ENCODE measurements at regions of chr11 and their contacts with region 1.

Region 1: DNA sequence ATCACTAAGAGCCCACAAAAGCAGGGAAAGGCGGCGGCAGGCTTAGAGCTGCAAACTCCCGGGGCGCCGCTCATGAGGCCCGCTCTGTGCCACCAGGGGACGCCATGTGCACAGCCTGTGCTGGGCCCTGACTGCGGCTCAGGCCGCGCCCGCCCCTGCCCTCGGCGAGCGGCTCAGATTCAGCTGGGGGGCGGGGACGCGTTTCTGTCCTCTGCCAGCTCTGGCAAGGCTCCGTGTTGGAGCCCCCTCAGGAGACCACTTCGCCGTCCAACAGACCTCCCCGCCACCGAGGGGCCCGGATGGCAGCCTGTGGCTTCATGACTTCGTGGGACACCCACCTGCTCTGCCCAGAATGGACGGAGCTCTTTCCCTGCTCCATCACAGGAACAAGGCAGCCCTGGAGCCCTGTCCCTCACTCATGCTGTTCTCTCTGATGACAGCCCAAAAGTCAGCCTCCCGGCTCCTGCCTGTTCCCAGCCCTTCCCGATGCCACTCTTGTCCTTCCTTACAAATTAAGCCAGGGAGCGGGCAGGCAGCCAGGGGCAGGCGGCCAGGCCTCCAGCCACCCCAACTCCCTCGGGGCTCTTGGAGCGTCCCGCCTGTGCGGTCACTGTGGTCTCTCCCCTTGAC is 69.1 kb downstream of the NAT10 start:
- DNase-seq: peak; percentile 67 to 76 (median 72)
- H3K4me3 ChIP-seq: no peak overlapping the region
- H3K4me3 Mint-ChIP-seq: peak overlapping the region in 7 of 8 donors; percentile 21 to 68 (median 57)
- H3K27ac ChIP-seq: no peak overlapping the region
- H3K27ac Mint-ChIP-seq: peak overlapping the region in 1 of 7 donors; percentile 35
- H3K4me1 ChIP-seq: peaks cover 6% of the 10 kb centered on the region
- H3K4me1 Mint-ChIP-seq: peaks cover 0 to 7% (median 1%) of the 10 kb centered on the region in 4 donors
- H3K27me3 ChIP-seq: no peaks in the 10 kb centered on the region
- H3K27me3 Mint-ChIP-seq: peaks cover 0 to 3% of the 10 kb centered on the region in 2 donors

Region 2: DNA sequence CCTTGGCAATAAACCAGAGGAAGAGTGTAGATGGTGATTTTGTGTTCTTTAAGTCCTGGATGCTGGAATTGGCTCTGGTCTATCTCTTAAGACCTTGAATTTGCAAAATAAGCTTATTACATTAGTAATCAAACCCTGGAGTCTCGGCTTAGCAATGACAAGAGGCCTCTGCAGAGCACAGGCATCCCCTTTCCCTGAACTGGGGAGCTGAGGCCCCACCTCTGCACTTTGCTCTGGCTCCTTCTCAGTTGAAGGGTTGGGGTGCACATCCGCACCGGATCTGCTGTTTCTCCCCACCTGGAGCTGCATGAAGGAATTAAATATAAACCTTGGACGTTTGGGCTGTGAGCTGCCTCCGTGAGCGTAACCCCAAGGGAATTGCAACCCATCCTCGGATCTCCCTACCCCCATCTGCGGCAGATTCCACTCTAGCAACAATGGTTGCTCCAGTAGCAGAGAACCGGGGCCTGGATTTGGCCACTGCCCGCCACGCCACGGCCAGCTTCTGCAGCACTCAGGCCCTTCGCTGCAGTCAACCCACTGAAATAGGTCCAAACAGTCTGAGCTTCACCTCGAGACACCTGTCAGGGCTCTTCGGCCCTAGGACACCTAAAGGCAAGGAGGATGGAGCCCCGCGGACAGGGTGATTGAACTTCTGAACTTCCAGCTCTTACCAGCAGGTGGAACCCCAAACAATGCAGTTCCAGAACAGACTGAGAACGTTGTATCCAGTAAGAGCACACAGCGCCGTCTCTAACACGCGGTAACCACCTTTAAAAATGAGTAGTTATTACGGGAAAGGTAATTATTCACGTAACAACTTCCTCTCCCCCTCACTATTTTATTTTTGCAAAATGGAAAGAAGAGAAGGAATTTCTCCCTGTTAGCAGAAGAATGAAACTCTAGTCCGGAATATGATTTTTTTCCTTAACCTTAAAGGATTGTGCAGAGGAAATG is 177.8 kb before region 1 on chr11:
- CTCF ChIA-PET with region 1: interaction called, 22 read pairs
- POLR2A ChIA-PET with region 1: no interaction called
- intact Hi-C with region 1: loop called (anchors 1 kb)
- DNase-seq: peak; percentile 71 to 77 (median 72)
- H3K4me3 ChIP-seq: no peak overlapping the region
- H3K4me3 Mint-ChIP-seq: peak overlapping the region in 6 of 8 donors; percentile 4 to 73 (median 62)
- H3K27ac ChIP-seq: no peak overlapping the region
- H3K27ac Mint-ChIP-seq: no peak overlapping the region
- H3K4me1 ChIP-seq: peaks cover 8% of the 10 kb centered on the region
- H3K4me1 Mint-ChIP-seq: peaks cover 6 to 11% (median 7%) of the 10 kb centered on the region in 4 donors
- H3K27me3 ChIP-seq: no peaks in the 10 kb centered on the region
- H3K27me3 Mint-ChIP-seq: peaks cover 14 to 23% of the 10 kb centered on the region in 2 donors

Region 3: DNA sequence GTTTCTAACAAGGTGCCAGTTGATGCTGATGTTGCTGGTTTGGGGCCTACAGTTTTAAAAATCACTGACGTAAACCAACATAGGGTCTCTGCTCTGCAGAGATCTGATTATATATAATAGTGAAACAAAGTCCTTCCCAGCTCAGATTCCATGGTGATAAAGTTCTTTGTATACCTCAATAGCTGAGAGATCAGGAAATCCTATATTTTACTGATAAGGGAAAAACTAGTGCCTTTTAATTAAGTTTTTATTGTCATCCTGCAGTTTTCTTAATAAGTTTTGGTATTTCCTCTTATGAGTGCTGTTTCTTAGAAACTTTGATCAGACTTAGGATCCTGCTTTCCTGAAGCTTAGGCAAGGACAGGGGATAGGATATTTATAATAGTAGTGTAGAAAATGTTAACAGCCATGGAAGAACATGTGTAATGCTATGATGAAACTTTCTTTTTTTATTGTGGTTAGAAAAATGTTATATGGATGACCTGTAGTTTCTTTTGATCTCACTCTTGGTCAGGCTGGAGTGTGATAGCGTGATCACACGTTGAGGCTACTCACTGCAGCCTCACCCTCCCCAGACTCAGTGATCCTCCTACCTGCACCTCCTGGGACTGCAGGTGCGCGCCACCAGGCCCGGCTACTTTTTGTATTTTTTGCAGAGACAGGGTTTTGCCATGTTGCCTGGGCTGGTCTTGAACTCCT is 108.9 kb before region 1 on chr11:
- CTCF ChIA-PET with region 1: no interaction called
- POLR2A ChIA-PET with region 1: no interaction called
- intact Hi-C with region 1: no loop called
- DNase-seq: peak in 1 of 5 donors; percentile 8
- H3K4me3 ChIP-seq: no peak overlapping the region
- H3K4me3 Mint-ChIP-seq: peak overlapping the region in 2 of 8 donors; percentile 4 to 48
- H3K27ac ChIP-seq: no peak overlapping the region
- H3K27ac Mint-ChIP-seq: peak overlapping the region in 4 of 7 donors; percentile 56 to 77 (median 67)
- H3K4me1 ChIP-seq: peaks cover 61% of the 10 kb centered on the region
- H3K4me1 Mint-ChIP-seq: peaks cover 42 to 75% (median 61%) of the 10 kb centered on the region in 4 donors
- H3K27me3 ChIP-seq: no peaks in the 10 kb centered on the region
- H3K27me3 Mint-ChIP-seq: no peaks in the 10 kb centered on the region

Region 4: GRCh38 chr11:34185926-34186841 is 11.7 kb after region 1 on chr11:
- CTCF ChIA-PET with region 1: interaction called, 44 read pairs
- POLR2A ChIA-PET with region 1: interaction called, 3 read pairs
- intact Hi-C with region 1: no loop called
- DNase-seq: no peak
- H3K4me3 ChIP-seq: no peak overlapping the region
- H3K4me3 Mint-ChIP-seq: no peak overlapping the region
- H3K27ac ChIP-seq: no peak overlapping the region
- H3K27ac Mint-ChIP-seq: no peak overlapping the region
- H3K4me1 ChIP-seq: no peaks in the 10 kb centered on the region
- H3K4me1 Mint-ChIP-seq: peaks cover 0 to 2% (median 0%) of the 10 kb centered on the region in 4 donors
- H3K27me3 ChIP-seq: no peaks in the 10 kb centered on the region
- H3K27me3 Mint-ChIP-seq: peaks cover 0 to 1% of the 10 kb centered on the region in 2 donors

Region 5: GRCh38 chr11:34366522-34366921 is 192.0 kb after region 1 on chr11:
- CTCF ChIA-PET with region 1: interaction called, 74 read pairs
- POLR2A ChIA-PET with region 1: no interaction called
- intact Hi-C with region 1: no loop called
- DNase-seq: no peak
- H3K4me3 ChIP-seq: no peak overlapping the region
- H3K4me3 Mint-ChIP-seq: no peak overlapping the region
- H3K27ac ChIP-seq: no peak overlapping the region
- H3K27ac Mint-ChIP-seq: no peak overlapping the region
- H3K4me1 ChIP-seq: no peaks in the 10 kb centered on the region
- H3K4me1 Mint-ChIP-seq: peaks cover 0 to 8% (median 3%) of the 10 kb centered on the region in 4 donors
- H3K27me3 ChIP-seq: peaks cover 4% of the 10 kb centered on the region
- H3K27me3 Mint-ChIP-seq: peaks cover 9 to 29% of the 10 kb centered on the region in 2 donors

Region 6: DNA sequence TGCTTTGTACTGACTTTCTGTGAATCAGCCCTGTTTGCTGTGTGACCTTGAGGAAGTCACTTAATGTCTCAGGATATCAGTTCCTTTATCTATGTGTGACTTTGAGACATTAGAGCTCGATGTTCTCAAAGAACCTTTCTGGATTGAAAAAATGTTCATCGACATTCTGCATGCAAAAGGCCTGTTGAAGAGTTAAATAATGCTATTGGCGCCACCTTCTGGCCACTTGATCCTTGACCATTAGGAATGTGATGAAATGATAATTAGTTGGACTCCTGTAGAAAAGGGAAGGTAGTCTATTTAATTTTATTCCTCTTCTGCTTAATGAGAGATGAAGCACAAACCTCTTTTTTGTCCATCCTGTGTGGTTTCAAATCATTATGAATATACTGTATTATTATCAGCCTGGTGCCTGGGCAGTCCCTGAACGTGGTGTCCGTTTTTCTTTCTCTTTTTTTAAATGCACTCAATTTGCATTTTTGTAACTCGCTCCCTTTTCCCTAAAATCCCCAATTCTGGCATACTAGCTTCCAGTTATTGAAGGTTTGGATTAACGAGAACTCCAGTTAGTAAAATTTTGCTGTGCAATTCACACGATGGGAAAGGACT is 318.4 kb after region 1 on chr11:
- CTCF ChIA-PET with region 1: interaction called, 11 read pairs
- POLR2A ChIA-PET with region 1: no interaction called
- intact Hi-C with region 1: loop called (anchors 1 kb)
- DNase-seq: peak in 4 of 5 donors; percentile 8 to 15 (median 12)
- H3K4me3 ChIP-seq: no peak overlapping the region
- H3K4me3 Mint-ChIP-seq: no peak overlapping the region
- H3K27ac ChIP-seq: no peak overlapping the region
- H3K27ac Mint-ChIP-seq: no peak overlapping the region
- H3K4me1 ChIP-seq: no peaks in the 10 kb centered on the region
- H3K4me1 Mint-ChIP-seq: no peaks in the 10 kb centered on the region
- H3K27me3 ChIP-seq: no peaks in the 10 kb centered on the region
- H3K27me3 Mint-ChIP-seq: peaks cover 4 to 6% of the 10 kb centered on the region in 2 donors

Measured in CD4-positive, alpha-beta memory T cell (primary cell).